Right cardiac atrium (tissue), 5 donors: ENCODE measurements at regions of chr19 and their contacts with region 1.

Region 1: DNA sequence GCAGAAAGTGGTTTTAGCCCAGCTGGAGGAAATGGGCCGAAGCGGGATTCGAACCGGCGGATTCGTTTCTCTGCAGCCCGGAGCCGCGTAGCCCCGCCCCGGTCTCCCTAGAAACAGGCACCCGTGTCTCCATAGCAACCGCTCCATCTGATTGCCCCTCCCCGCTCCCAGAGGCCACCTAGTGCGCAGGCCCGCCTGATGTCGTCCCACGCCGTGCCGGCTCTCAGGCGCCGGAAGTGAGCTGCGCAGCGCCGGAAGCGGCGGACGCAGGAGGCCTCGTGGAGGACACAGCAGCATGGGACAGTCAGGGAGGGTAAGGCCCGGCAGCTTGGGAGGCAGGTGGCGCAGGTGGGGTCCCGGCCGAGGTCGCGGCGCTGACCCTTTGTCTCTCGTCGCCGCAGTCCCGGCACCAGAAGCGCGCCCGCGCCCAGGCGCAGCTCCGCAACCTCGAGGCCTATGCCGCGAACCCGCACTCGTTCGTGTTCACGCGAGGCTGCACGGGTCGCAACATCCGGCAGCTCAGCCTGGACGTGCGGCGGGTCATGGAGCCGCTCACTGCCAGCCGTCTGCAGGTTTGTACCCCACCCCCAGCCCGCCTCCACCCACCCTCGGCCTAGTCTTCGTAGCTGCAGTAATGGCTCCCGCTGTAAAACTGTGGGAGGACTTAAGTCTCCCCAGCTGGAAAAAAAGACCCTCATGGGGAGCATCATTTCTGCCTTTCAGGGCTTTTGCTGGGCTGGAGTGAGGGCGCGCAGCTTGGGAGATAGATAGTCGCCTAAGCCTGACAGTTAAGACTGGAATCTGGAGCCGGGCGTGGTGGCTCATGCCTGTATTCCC is at the start of gene PPAN:
- DNase-seq: peak; percentile 99
- ATAC-seq: peak; percentile 97 to 98
- H3K4me3 ChIP-seq: peak within 1 kb of the TSS; percentile 63
- H3K27ac ChIP-seq: peak within 1 kb of the TSS; percentile 6
- H3K4me1 ChIP-seq: no peaks in the 10 kb centered on the region
- H3K27me3 ChIP-seq: no peaks in the 10 kb centered on the region
- total RNA-seq, gene PPAN: 16.5 to 29.4 (median 25.7) TPM

Region 2: DNA sequence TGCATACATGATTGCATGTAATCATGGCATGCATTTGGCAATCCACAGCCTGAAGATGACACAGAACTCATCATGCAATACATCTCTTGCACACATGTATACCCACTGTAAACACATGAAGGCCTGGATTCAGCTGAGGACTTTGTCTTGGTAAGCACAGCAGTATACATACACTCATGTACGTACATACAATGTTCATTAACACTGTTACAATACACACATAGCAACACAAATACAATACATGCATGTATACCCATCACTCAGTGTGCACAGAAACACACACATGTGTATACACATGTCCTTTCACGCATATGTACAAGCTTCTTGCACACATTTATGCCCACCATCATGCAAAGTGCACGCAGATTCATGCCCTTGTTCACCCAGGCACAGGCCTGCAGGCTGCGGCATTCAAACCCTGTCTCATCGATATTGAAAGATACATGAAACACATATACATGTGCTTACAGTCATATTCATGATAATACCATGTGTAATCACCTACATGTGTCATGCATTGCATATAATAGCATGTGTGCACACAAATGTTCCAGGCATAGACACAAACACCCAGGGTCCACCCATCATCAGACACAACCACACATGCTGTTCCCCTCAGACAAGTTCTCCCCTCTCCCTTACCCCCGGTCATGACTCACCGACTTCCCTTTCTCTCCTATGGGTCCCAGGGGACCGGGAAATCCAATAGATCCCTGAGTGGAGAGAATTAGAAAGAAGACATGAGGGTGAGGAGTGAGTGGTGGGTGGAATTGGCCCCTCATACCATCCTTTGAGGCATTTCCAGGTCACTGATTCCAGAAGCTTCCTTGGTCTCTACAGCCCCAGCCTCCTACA is 124.7 kb before region 1 on chr19:
- intact Hi-C with region 1: no loop called
- DNase-seq: no peak
- ATAC-seq: no peak
- H3K4me3 ChIP-seq: no peak overlapping the region
- H3K27ac ChIP-seq: no peak overlapping the region
- H3K4me1 ChIP-seq: no peaks in the 10 kb centered on the region
- H3K27me3 ChIP-seq: no peaks in the 10 kb centered on the region

Region 3: GRCh38 chr19:10230861-10231611 is 124.7 kb after region 1 on chr19 and contains the start of gene S1PR2:
- intact Hi-C with region 1: loop called in 1 of 4 experiments (anchors 10 kb)
- DNase-seq: peak; percentile 90 to 95 (median 95)
- ATAC-seq: peak; percentile 73 to 74
- H3K4me3 ChIP-seq: peak within 1 kb of the TSS; percentile 97
- H3K27ac ChIP-seq: peak within 1 kb of the TSS; percentile 87
- H3K4me1 ChIP-seq: peaks cover 4% of the 10 kb centered on the region
- H3K27me3 ChIP-seq: no peaks in the 10 kb centered on the region
- total RNA-seq, gene S1PR2: 4.7 to 18.8 (median 9.5) TPM